GM12878 (cell line): ENCODE measurements at regions of chr2 and their contacts with region 1.

Region 1: GRCh38 chr2:149430743-149431737 is 100.7 kb downstream of the LYPD6 start:
- DNase-seq: no peak
- ATAC-seq: no peak
- H3K4me3 ChIP-seq: no peak overlapping the region
- H3K27ac ChIP-seq: no peak overlapping the region
- H3K4me1 ChIP-seq: no peaks in the 10 kb centered on the region
- H3K27me3 ChIP-seq: no peaks in the 10 kb centered on the region
- CTCF ChIP-seq: no peak
- EP300 ChIP-seq: no peak
- POLR2A ChIP-seq: no peak
- RAD21 ChIP-seq: no peak

Region 2: DNA sequence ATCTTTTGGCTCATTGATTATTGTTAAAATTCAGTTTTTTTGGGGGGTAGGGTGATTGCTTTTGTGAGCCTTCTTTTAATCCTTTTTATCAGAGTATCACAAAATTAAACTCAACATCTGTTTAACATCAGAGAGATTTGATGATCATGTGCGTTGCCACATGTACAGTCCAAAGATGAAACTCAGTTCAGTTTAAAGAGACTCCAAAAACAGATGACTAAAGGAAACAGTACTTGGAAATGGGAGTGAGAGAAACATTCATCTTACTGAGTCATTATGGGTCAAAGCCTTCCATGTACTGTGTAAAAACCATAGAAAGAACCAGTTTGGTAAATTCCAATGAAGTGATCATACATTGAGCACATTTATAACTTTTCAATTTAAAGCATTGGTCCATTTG is 47.7 kb before region 1 on chr2:
- CTCF ChIA-PET with region 1: no interaction called
- POLR2A ChIA-PET with region 1: no interaction called
- RAD21 ChIA-PET with region 1: no interaction called
- SMC1A ChIA-PET with region 1: no interaction called
- in situ Hi-C with region 1: no loop called
- intact Hi-C with region 1: loop called (anchors 5 kb)
- DNase-seq: no peak
- ATAC-seq: no peak
- H3K4me3 ChIP-seq: no peak overlapping the region
- H3K27ac ChIP-seq: no peak overlapping the region
- H3K4me1 ChIP-seq: no peaks in the 10 kb centered on the region
- H3K27me3 ChIP-seq: no peaks in the 10 kb centered on the region
- CTCF ChIP-seq: no peak
- EP300 ChIP-seq: no peak
- POLR2A ChIP-seq: no peak
- RAD21 ChIP-seq: no peak